ENCODE measurements at regions of chr11 and their contacts with region 1.

Region 1: DNA sequence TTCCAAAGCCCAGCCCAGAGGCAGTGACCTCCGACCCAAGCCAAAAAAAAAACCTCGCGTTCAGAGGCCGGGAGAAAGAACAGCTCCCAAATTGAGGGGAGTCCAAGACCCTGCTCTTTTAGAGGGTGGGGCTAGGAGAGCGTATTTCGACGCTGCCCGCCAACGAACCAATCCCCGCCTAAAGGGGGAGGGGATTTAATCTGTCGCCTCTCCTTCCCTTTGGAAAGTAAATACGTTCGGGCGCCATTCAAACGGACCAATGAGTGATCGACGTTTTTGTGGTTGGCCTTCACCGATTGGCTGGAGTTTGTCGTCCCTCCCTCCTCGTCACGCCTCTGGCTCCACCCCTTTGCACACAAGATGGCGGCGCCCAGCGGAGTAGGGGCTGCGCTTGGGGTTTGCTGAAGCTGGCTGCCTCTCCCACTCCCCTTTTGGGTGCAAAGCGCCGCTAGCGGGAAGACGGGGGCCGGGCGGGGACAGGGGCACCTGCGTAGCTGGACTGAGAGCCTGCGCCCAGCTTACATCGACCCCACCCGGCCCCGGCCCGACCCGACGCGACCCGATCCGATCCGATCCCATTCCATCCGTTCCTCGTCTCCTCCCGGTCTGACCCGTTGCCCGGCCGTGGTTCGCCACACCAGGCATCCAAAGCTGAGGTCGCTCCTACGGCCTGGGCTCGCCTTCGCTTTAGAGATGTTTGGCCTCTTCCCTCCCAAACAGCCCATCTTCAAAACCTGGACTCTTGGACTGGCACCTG is at the start of gene RNF26:
- DNase-seq: peak; percentile 95
- ATAC-seq: peak; percentile 82
- H3K4me3 Mint-ChIP-seq: peak within 1 kb of the TSS; percentile 100
- H3K27ac Mint-ChIP-seq: peak within 1 kb of the TSS; percentile 100
- H3K4me1 Mint-ChIP-seq: peaks cover 44% of the 10 kb centered on the region
- H3K27me3 Mint-ChIP-seq: peaks cover 11% of the 10 kb centered on the region
- CTCF ChIP-seq: no peak
- total RNA-seq, gene RNF26: 90.0 to 91.1 TPM (median 90.6 TPM) in 3 replicates

Region 2: DNA sequence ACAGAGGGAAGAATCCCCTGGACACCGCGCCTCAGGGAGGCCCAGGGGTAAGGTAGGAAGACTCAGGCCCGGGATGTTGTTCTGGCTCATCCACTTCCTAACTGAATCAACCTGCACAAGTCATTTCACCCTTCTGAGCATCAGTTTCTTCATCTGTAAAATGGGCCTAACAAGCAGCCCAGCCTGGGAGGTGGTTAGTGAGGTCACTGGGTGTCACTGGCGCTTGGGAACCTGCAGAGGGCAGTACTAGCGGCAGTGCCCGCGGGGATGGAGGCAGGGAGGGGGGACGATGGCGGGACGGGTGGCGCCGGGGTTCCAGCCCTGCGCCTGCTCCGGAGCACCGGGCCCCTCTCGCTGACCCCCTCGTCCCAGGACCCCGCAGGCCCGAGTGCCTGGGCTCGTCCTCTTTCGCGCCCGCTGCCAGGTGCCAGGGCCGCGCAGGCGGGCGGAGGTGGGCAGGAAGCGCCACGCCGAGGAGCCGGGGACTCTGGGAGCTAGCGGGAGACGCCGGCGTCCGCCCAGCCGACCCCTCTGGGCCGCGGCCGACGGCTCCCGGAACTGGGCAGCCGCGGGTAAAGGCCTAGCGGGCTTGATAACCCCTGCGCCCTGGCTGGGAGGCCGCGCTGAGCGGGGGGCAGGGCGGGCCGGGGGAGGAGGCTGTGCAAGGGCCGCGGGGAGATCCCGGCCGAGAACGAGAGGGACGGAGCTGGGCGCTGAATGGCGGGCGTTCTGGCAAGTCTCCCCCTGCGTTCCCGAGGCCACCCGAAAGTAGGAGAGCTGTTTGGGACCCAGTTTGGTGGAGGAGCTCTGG is 165.7 kb before region 1 on chr11 and contains the start of gene NLRX1:
- CTCF ChIA-PET with region 1: interaction called, 15 read pairs
- POLR2A ChIA-PET with region 1: no interaction called
- DNase-seq: peak; percentile 83
- ATAC-seq: peak; percentile 72
- H3K4me3 Mint-ChIP-seq: peak within 1 kb of the TSS; percentile 83
- H3K27ac Mint-ChIP-seq: peak within 1 kb of the TSS; percentile 95
- H3K4me1 Mint-ChIP-seq: peaks cover 26% of the 10 kb centered on the region
- H3K27me3 Mint-ChIP-seq: no peaks in the 10 kb centered on the region
- CTCF ChIP-seq: peak; percentile 43; the same call in 1 of the 2 replicates
- total RNA-seq, gene NLRX1: 19.9 to 23.2 TPM (median 20.8 TPM) in 3 replicates

Region 3: GRCh38 chr11:119306373-119306890 is 27.9 kb before region 1 on chr11:
- CTCF ChIA-PET with region 1: interaction called, 46 read pairs
- POLR2A ChIA-PET with region 1: no interaction called
- DNase-seq: no peak
- ATAC-seq: peak; percentile 14; the same call in 1 of the 2 replicates
- H3K4me3 Mint-ChIP-seq: no peak overlapping the region
- H3K27ac Mint-ChIP-seq: peak overlapping the region; percentile 64; the same call in 1 of the 2 replicates
- H3K4me1 Mint-ChIP-seq: peaks cover 14% of the 10 kb centered on the region
- H3K27me3 Mint-ChIP-seq: no peaks in the 10 kb centered on the region
- CTCF ChIP-seq: no peak

Region 4: GRCh38 chr11:119347242-119347641 is 12.9 kb after region 1 on chr11:
- CTCF ChIA-PET with region 1: interaction called, 14 read pairs
- POLR2A ChIA-PET with region 1: no interaction called
- DNase-seq: no peak
- ATAC-seq: no peak
- H3K4me3 Mint-ChIP-seq: no peak overlapping the region
- H3K27ac Mint-ChIP-seq: no peak overlapping the region
- H3K4me1 Mint-ChIP-seq: no peaks in the 10 kb centered on the region
- H3K27me3 Mint-ChIP-seq: peaks cover 64% of the 10 kb centered on the region
- CTCF ChIP-seq: no peak

Region 5: GRCh38 chr11:119373921-119374631 is 39.7 kb after region 1 on chr11:
- CTCF ChIA-PET with region 1: interaction called, 262 read pairs
- POLR2A ChIA-PET with region 1: interaction called, 4 read pairs
- DNase-seq: peak; percentile 92
- ATAC-seq: peak; percentile 71
- H3K4me3 Mint-ChIP-seq: no peak overlapping the region
- H3K27ac Mint-ChIP-seq: no peak overlapping the region
- H3K4me1 Mint-ChIP-seq: peaks cover 74% of the 10 kb centered on the region
- H3K27me3 Mint-ChIP-seq: peaks cover 1% of the 10 kb centered on the region; the same call in 1 of the 2 replicates
- CTCF ChIP-seq: peak; percentile 79

Region 6: DNA sequence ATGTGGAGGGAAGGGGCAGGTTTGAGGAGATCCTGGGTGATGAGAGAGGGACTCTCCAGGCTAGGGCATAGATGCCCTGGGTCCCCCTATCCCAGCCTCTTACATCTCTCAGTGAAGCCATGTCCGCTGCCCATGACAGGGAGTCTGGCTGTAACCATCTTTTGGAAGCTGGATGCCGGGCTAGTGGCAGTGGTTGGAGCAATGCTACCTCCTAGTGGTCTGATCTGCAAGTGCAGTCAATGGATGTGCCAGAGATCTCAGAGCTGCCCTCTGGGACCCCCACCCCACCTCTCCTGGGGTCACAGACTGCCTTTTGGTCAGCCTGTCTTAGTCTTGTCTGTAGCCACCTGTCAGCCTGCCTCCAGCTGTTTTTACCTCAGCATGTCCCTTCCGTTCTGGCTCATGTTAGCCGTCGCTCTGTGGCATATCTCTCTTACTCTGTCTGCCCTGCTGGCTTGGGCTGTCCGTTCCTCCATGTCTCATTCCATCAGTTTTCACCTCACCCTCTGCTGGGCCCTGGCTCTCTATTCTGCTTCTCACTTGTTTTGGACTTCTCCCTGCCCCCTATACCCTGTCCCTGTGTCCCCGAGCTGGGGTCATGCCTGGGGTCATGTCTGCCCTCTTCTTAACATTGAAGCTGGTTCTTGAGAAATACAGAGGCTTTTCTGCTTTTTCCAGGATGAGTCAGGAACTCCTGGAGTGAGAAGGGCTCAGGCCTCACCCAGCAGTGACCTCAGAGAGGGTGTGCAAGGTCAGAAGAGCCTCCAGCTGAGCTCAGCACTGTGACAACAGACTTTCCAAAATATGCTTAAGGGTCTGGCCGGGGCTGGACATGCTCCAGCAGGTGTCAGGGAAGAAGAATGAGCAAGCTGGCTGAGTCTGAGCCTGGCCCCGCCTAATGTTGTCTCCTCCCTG is 140.6 kb after region 1 on chr11:
- CTCF ChIA-PET with region 1: interaction called, 88 read pairs
- POLR2A ChIA-PET with region 1: interaction called, 3 read pairs
- DNase-seq: peak; percentile 87
- ATAC-seq: peak; percentile 86
- H3K4me3 Mint-ChIP-seq: no peak overlapping the region
- H3K27ac Mint-ChIP-seq: no peak overlapping the region
- H3K4me1 Mint-ChIP-seq: peaks cover 39% of the 10 kb centered on the region
- H3K27me3 Mint-ChIP-seq: peaks cover 5% of the 10 kb centered on the region; the same call in 1 of the 2 replicates
- CTCF ChIP-seq: peak; percentile 95

Region 7: DNA sequence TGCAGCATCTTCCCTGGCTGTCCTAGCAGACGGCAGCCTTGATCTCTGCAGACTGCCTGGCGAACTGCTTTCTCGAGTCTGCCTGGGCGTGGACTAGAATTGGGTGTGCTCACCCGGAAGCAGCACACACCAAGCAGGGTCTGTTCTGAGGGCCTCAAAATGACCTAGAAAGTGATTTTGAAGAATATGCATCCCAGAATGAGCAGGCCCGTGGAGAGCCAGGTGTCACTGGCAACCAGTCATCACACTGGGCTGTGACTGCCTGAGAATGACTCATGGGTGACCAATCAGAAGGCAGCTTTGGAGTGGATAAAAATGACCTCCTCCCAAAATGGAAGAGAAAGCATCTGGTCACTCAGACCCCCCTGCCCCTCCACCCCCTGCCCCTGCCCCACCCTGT is 509.5 kb after region 1 on chr11:
- CTCF ChIA-PET with region 1: no interaction called
- POLR2A ChIA-PET with region 1: no interaction called
- DNase-seq: no peak
- ATAC-seq: no peak
- H3K4me3 Mint-ChIP-seq: no peak overlapping the region
- H3K27ac Mint-ChIP-seq: no peak overlapping the region
- H3K4me1 Mint-ChIP-seq: peaks cover 9% of the 10 kb centered on the region
- H3K27me3 Mint-ChIP-seq: no peaks in the 10 kb centered on the region; the same call in 1 of the 2 replicates
- CTCF ChIP-seq: no peak